ENCODE measurements at regions of chr10 and their contacts with region 1.

Region 1: GRCh38 chr10:79374312-79375191 is 27.3 kb downstream of the PPIF start:
- DNase-seq: peak; percentile 59 to 97 (median 87)

Region 2: DNA sequence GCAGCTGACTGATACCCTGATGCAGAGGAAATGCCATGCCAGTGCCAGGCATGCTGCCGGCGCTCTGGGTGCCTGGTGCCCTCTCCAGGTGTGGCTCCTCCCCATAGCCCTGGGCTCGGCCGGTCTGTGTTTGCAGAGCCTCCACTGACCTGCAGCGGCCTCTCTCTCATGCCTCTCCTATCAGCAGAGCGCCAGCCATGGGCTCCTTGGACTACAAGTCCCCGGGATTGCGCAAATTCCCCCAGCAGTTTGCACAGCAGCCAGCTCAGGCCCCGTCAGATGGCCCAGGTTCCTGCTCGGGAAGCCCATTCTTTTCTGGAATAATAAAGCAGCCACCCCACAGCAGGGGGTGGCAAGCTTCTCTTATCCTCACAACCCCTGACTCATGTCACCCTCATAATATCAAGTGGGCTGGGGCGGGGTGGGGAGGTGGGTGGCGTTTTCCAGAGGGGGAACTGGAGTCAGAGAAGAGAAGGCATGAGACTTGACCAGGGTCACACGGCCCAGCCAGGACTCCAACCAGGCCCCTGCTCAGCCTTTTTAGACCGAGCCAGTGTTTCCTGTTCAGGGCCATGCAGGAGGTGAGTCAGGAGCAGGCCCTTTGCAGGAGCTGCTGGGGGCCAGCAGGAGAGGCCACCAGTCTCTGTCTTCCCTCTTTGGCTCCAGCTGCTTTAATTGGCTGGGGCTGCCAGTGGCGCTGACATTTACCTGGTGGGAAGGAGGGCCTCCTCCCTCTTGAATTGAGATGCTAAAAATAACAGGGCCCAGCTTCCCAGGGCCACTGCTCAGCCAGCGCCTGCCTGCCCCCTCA is 247.2 kb before region 1 on chr10:
- intact Hi-C with region 1: no loop called
- DNase-seq: no peak

Region 3: DNA sequence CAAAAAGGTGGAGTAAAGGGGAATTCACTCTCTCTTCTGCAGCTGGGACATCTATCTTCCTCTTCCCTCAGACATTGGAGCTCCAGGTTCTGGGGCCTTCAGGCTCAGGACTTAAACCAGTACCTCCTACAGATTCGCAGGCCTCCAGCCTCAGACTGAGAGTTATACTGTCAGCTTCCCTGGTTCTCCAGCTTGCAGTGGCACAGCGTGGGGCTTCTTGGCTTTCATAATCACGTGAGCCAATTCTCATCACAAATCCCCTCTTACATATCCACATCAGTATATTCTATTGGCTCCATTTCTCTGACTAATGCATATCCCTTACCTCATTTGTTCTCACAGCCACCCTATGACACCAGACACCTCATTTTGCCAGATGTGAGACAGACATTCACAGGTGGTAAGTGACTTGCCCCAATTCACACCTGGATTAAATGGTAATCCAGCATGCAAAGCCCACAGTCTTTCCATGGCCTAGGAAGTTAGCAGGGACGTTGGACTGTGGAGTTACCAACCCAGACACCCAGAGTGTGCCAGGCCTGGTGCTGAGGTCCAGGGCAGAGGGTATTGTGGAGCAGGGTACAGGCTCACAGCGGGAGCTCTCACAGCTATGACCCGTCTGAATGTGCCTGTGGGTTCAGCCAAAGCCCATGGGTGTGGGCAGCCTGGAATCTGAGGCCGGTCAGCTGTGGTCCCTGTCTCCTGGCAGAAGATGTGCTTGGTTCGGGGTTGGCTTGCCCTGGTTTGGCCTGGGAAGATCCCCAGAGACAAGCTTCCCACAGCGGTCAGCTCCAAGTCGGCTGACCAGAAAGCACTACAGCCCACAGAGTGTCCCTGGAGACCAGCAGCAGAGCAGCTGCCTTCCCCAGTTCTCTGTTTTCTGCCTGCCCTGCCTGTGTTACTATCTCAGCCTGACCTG is 89.3 kb after region 1 on chr10:
- intact Hi-C with region 1: loop called (anchors 1 kb)
- DNase-seq: no peak

Region 4: DNA sequence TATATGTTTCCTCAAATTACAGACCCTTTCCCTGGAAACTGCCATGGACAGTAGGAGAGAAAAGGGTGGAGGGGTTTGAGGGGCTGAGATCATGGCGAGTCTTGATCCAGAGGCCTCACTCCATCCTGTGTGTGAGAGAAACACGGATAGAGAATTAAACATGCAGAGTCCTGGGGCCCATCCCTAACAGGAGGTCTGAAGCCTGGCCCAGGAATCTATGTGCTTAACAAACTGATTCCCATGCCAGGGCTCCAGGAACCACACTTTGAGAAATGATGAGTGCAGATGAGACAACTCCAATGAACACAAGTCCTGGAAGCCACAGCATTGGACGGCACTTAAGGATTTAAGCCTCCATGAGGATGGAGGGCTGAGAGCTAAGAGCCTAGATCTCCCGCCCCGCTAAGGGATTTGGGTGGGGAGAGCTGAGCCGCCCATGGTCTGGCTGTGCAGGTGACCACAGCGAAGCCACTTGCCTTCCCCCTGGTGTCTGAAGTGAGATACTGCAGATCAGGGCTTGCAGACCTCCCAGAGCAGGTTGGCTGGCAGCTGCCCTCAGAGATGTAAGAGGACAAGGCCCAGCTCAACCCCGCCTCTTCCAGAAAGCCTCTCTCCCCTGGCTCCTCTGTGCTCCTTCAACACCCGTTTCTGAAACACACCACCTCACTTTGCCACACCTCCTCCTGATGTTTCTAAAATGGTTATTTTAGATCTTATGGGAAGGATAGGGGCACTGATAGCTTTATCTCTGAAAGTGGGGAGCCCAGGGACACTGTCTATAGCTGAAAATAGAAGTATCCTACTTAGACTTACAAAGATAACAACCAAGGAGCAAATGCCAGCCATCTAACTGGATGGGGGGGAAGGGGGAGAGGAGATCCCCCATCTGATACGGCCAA is 113.0 kb after region 1 on chr10:
- intact Hi-C with region 1: loop called (anchors 5 kb)
- DNase-seq: peak in 5 of 10 donors; percentile 25 to 86 (median 36)